T-cell (primary cell): ENCODE measurements at regions of chr10 and their contacts with region 1.

Region 1: DNA sequence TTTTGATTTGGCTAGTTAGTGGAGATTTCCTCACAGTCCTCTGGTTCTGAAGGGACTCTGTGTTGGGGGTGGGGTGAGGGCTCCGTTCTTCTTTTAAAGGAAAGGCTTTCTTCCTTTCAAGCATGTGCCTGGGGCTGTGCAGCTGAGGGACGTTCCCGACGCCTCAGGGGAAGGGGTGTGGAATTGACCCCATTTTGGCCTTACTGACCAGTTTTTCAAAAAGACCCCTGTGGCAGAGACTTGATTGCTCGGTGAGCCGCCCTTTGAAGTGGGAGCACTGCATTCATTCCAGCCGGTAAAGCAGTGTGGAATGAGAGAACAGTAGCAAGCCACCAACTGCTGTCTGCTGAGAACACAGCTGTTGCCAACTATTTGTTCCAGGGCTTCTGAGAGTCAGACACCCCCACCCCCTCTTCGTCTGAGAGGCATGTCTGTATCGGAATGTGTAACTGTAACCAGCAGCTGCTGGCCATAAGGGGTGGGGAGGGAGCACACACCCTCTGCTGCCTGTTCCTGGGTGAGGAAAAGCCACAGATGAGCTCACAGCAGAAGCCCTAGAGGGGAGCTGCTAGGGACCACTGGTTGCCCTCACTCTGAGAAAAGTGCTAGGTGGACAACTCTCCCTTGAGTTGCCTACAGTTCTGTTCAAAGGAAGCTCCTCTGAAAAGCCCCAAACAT is 33.2 kb downstream of the WBP1L start:
- DNase-seq: peak in 6 of 35 experiments; percentile 3 to 38 (median 19)
- ATAC-seq: peak in 1 of 4 experiments; percentile 32
- H3K4me3 ChIP-seq: no peak overlapping the region
- H3K4me3 Mint-ChIP-seq: peak overlapping the region in 1 of 3 donors; percentile 62
- H3K27ac ChIP-seq: no peak overlapping the region
- H3K27ac Mint-ChIP-seq: no peak overlapping the region
- H3K4me1 ChIP-seq: peaks cover 12 to 46% of the 10 kb centered on the region in 2 experiments
- H3K4me1 Mint-ChIP-seq: peaks cover 60 to 73% (median 71%) of the 10 kb centered on the region in 3 donors
- H3K27me3 ChIP-seq: no peaks in the 10 kb centered on the region
- H3K27me3 Mint-ChIP-seq: no peaks in the 10 kb centered on the region

Region 2: GRCh38 chr10:102476466-102477141 is 300.3 kb before region 1 on chr10:
- CTCF ChIA-PET with region 1: no interaction called
- POLR2A ChIA-PET with region 1: no interaction called
- DNase-seq: peak in 16 of 35 experiments; percentile 12 to 51 (median 32)
- ATAC-seq: no peak
- H3K4me3 ChIP-seq: no peak overlapping the region
- H3K4me3 Mint-ChIP-seq: no peak overlapping the region
- H3K27ac ChIP-seq: peak overlapping the region; percentile 13
- H3K27ac Mint-ChIP-seq: peak overlapping the region; percentile 69 to 73
- H3K4me1 ChIP-seq: peaks cover 22 to 49% of the 10 kb centered on the region in 2 experiments
- H3K4me1 Mint-ChIP-seq: peaks cover 27 to 33% (median 29%) of the 10 kb centered on the region in 3 donors
- H3K27me3 ChIP-seq: no peaks in the 10 kb centered on the region
- H3K27me3 Mint-ChIP-seq: no peaks in the 10 kb centered on the region

Region 3: GRCh38 chr10:102652170-102652916 is 124.6 kb before region 1 on chr10:
- CTCF ChIA-PET with region 1: no interaction called
- POLR2A ChIA-PET with region 1: no interaction called
- DNase-seq: no peak
- ATAC-seq: peak in 2 of 4 experiments; percentile 18 to 38
- H3K4me3 ChIP-seq: peak overlapping the region in 1 of 2 donors; percentile 26
- H3K4me3 Mint-ChIP-seq: peak overlapping the region; percentile 32 to 95 (median 36)
- H3K27ac ChIP-seq: peak overlapping the region; percentile 60
- H3K27ac Mint-ChIP-seq: peak overlapping the region; percentile 83 to 89
- H3K4me1 ChIP-seq: peaks cover 56 to 78% of the 10 kb centered on the region in 2 experiments
- H3K4me1 Mint-ChIP-seq: peaks cover 68 to 80% (median 74%) of the 10 kb centered on the region in 3 donors
- H3K27me3 ChIP-seq: no peaks in the 10 kb centered on the region
- H3K27me3 Mint-ChIP-seq: no peaks in the 10 kb centered on the region

Region 4: DNA sequence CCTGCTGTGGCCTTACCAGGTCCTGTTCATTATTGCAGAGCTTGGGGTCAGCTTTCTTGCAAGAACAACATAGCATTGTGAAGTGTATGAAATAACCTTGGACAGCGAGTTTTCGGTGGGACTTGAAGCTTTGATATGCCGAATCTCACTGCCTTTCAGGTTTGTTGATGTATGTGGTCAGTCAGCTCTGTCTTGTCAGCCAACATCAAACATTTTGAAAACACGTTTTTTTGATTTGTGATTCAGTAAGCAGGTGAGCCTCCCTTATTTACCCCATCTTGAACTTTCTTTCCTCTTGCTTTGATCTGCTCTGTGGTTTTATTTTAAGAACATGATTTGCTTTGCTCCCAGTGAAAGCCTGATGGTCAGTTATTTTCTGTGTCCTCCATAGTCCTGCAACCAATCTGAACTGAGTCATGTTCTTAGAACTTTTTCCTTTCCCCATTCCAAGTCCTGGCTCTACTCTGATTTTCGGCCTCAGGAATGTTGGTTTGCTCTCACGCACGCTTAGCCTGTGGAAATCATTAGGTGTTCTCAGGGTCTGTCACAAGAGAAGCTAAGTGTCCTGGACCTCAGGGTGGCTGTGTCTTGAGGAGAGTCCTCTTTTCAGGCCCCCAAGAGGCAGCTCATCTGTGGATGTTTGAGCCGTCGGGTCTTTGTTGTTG is 24.5 kb before region 1 on chr10:
- CTCF ChIA-PET with region 1: interaction called in 1 of 2 experiments, 3 read pairs
- POLR2A ChIA-PET with region 1: interaction called, 7 to 17 read pairs
- DNase-seq: no peak
- ATAC-seq: peak in 3 of 4 experiments; percentile 43 to 50 (median 47)
- H3K4me3 ChIP-seq: no peak overlapping the region
- H3K4me3 Mint-ChIP-seq: peak overlapping the region in 1 of 3 donors; percentile 31
- H3K27ac ChIP-seq: no peak overlapping the region
- H3K27ac Mint-ChIP-seq: peak overlapping the region; percentile 18 to 64
- H3K4me1 ChIP-seq: peaks cover 7 to 22% of the 10 kb centered on the region in 2 experiments
- H3K4me1 Mint-ChIP-seq: peaks cover 48 to 57% (median 57%) of the 10 kb centered on the region in 3 donors
- H3K27me3 ChIP-seq: no peaks in the 10 kb centered on the region
- H3K27me3 Mint-ChIP-seq: no peaks in the 10 kb centered on the region